GM23248 (cell line): ENCODE measurements at regions of chr16 and their contacts with region 1.

Region 1: DNA sequence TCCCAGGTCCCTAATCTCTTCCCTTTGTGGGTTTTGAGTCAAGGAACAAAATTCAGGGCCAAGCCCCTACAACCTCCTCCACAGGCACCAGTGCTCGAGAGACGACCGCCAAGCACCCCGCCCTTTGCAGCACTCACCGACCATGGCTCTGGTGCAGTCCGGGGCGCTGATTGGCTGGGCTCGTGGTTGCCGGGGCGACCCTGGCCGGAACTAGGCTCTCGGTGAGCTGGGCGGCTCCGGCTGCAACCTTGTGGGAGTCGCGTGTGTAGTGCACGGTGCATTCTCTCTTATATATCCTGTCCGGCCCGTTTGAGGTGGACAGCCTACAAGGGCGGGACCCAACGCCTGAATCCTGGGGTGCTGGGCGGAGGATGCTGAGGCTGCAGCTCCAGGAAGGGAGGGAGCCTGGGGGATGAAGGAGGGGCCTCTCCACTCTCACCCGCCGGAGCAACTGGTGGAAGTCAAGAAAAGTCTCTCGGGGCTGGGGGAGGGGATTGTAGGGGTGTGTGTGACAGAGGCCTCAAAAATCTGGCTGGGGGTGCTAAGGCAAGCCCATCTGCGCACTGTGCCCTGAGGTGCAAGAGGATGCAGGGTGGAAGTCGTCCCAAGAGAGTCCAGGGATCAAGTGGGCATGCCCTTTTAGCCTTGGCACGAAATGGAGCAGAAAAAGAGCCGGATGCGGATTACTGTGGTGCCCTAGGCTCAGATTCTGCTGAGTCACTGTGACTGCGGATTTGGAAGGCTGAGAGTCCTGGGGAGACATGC is at the start of gene NQO1:
- DNase-seq: peak; percentile 98
- H3K4me3 ChIP-seq: peak within 1 kb of the TSS; percentile 93
- H3K27ac ChIP-seq: peak within 1 kb of the TSS; percentile 92
- H3K4me1 ChIP-seq: peaks cover 24% of the 10 kb centered on the region
- H3K27me3 ChIP-seq: no peaks in the 10 kb centered on the region
- total RNA-seq, gene NQO1: 332 and 431 TPM in 2 replicates

Region 2: GRCh38 chr16:69424935-69425784 is 301.3 kb before region 1 on chr16:
- in situ Hi-C with region 1: no loop called
- DNase-seq: no peak
- H3K4me3 ChIP-seq: peak overlapping the region; percentile 84
- H3K27ac ChIP-seq: peak overlapping the region; percentile 48
- H3K4me1 ChIP-seq: peaks cover 5% of the 10 kb centered on the region
- H3K27me3 ChIP-seq: no peaks in the 10 kb centered on the region

Region 3: GRCh38 chr16:69613378-69614154 is 112.9 kb before region 1 on chr16:
- in situ Hi-C with region 1: no loop called
- DNase-seq: peak; percentile 70
- H3K4me3 ChIP-seq: no peak overlapping the region
- H3K27ac ChIP-seq: peak overlapping the region; percentile 57
- H3K4me1 ChIP-seq: peaks cover 37% of the 10 kb centered on the region
- H3K27me3 ChIP-seq: no peaks in the 10 kb centered on the region

Region 4: DNA sequence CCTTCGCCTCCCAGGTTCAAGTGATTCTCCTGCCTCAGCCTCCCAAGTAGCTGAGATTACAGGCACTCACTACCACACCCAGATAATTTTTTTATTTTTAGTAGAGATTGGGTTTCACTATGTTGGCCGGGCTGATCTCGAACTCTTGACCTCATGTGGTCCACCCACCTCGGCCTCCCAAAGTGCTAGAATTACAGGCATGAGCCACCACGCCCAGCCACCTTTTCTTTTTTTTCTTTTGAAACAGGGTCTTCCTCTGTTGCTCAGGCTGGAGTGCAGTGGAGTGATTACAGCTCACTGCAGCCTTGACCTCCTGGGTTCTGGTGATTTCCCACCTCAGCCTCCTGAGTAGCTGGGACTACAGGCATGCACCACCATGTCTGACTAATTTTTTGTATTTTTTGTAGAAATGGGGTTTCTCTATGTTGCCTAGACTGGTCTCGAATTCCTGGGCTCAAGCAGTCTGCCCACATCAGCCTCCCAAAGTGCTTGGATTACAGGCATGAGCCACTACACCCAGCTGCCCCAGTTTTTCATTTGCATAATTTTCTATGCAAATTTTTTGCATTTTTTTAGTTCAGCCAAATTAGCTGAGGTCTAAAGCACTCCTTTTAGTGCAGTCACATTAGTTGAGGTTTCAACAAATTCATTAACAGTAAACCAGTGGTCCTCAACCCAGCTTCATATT is 46.9 kb after region 1 on chr16:
- in situ Hi-C with region 1: no loop called
- DNase-seq: no peak
- H3K4me3 ChIP-seq: no peak overlapping the region
- H3K27ac ChIP-seq: no peak overlapping the region
- H3K4me1 ChIP-seq: 0 out of 2 replicates have a peak, but pooled peaks cover 6% of the 10 kb centered on the region
- H3K27me3 ChIP-seq: no peaks in the 10 kb centered on the region

Region 5: GRCh38 chr16:69787883-69788282 is 61.4 kb after region 1 on chr16:
- in situ Hi-C with region 1: loop called (anchors 10 kb)
- DNase-seq: no peak
- H3K4me3 ChIP-seq: no peak overlapping the region
- H3K27ac ChIP-seq: no peak overlapping the region
- H3K4me1 ChIP-seq: no peaks in the 10 kb centered on the region
- H3K27me3 ChIP-seq: no peaks in the 10 kb centered on the region